Breast epithelium (tissue), 4 donors: ENCODE measurements at regions of chr4 and their contacts with region 1.

Region 1: GRCh38 chr4:52712172-52712990 is 38.8 kb downstream of the ERVMER34-1 start:
- DNase-seq: peak; percentile 98 to 99
- H3K4me3 ChIP-seq: peak overlapping the region; percentile 81 to 98 (median 93)
- H3K27ac ChIP-seq: peak overlapping the region; percentile 95 to 97
- H3K4me1 ChIP-seq: peaks cover 0 to 18% of the 10 kb centered on the region in 2 donors
- H3K27me3 ChIP-seq: no peaks in the 10 kb centered on the region
- CTCF ChIP-seq: no peak
- POLR2A ChIP-seq: peak; percentile 82

Region 2: GRCh38 chr4:54661686-54662085 is 1949.3 kb after region 1 on chr4:
- intact Hi-C with region 1: loop called (anchors 10 kb)
- DNase-seq: no peak
- H3K4me3 ChIP-seq: peak overlapping the region in 1 of 3 donors; percentile 68
- H3K27ac ChIP-seq: peak overlapping the region in 1 of 2 donors; percentile 38
- H3K4me1 ChIP-seq: peaks cover 5 to 8% of the 10 kb centered on the region in 2 donors
- H3K27me3 ChIP-seq: peaks cover 0 to 5% of the 10 kb centered on the region in 2 donors
- CTCF ChIP-seq: no peak
- POLR2A ChIP-seq: no peak